ENCODE measurements at regions of chr19 and their contacts with region 1.

Region 1: DNA sequence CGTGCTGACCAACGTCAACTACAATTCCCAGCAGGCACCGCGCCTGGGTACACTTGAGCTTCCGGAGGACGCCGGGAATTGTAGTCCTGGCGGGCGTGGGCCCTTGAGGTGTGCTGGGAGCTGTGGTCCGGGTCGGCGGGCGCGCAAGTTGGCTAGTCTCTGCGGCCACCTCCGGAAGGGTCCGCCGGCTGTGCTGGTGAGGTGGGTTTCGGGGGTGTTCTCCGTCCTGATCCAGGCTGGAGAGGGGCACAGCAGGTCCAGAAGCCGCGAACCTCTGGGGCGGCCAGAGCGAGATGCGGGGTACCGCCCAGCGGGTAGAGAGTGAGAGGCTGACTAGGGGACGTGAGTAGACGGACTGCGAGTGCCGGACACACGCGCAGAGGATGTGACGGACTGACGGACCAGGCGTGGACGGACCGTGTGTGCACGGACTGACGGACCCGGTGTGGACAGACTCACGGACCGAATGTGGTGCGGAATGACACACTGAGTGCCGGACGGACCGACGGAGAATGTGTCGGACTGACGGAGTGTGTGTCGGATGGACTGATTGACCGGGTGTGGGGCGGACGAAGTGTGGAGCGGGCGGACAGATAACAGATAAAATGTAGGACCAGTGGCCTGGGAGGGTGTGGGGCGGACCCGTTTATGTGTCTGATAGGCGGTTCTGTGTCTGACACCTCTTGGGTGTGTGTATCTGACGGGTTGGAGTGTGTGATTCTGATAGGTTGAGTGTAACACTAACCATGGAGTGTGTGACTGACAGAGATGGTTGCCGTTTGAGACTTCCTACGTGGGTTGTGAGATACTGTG is at the start of gene ZSCAN22:
- DNase-seq: peak; percentile 90
- ATAC-seq: peak; percentile 92
- H3K4me3 ChIP-seq: peak within 1 kb of the TSS; percentile 72 to 98 (median 83)
- H3K4me3 Mint-ChIP-seq: no peak within 1 kb of the TSS
- H3K27ac ChIP-seq: peak within 1 kb of the TSS; percentile 71 to 82
- H3K27ac Mint-ChIP-seq: no peak within 1 kb of the TSS
- H3K4me1 ChIP-seq: peaks cover 11 to 23% of the 10 kb centered on the region in 2 donors
- H3K4me1 Mint-ChIP-seq: no peaks in the 10 kb centered on the region
- H3K27me3 ChIP-seq: no peaks in the 10 kb centered on the region
- H3K27me3 Mint-ChIP-seq: no peaks in the 10 kb centered on the region
- CTCF ChIP-seq: no peak
- total RNA-seq, gene ZSCAN22: 7.1 TPM in 2 replicates

Region 2: GRCh38 chr19:58261968-58262921 is 64.9 kb before region 1 on chr19:
- CTCF ChIA-PET with region 1: no interaction called
- POLR2A ChIA-PET with region 1: no interaction called
- intact Hi-C with region 1: no loop called
- DNase-seq: no peak
- ATAC-seq: no peak
- H3K4me3 ChIP-seq: peak overlapping the region in 1 of 5 experiments; percentile 7
- H3K4me3 Mint-ChIP-seq: no peak overlapping the region
- H3K27ac ChIP-seq: no peak overlapping the region
- H3K27ac Mint-ChIP-seq: no peak overlapping the region
- H3K4me1 ChIP-seq: no peaks in the 10 kb centered on the region
- H3K4me1 Mint-ChIP-seq: no peaks in the 10 kb centered on the region
- H3K27me3 ChIP-seq: no peaks in the 10 kb centered on the region
- H3K27me3 Mint-ChIP-seq: no peaks in the 10 kb centered on the region
- CTCF ChIP-seq: no peak

Region 3: DNA sequence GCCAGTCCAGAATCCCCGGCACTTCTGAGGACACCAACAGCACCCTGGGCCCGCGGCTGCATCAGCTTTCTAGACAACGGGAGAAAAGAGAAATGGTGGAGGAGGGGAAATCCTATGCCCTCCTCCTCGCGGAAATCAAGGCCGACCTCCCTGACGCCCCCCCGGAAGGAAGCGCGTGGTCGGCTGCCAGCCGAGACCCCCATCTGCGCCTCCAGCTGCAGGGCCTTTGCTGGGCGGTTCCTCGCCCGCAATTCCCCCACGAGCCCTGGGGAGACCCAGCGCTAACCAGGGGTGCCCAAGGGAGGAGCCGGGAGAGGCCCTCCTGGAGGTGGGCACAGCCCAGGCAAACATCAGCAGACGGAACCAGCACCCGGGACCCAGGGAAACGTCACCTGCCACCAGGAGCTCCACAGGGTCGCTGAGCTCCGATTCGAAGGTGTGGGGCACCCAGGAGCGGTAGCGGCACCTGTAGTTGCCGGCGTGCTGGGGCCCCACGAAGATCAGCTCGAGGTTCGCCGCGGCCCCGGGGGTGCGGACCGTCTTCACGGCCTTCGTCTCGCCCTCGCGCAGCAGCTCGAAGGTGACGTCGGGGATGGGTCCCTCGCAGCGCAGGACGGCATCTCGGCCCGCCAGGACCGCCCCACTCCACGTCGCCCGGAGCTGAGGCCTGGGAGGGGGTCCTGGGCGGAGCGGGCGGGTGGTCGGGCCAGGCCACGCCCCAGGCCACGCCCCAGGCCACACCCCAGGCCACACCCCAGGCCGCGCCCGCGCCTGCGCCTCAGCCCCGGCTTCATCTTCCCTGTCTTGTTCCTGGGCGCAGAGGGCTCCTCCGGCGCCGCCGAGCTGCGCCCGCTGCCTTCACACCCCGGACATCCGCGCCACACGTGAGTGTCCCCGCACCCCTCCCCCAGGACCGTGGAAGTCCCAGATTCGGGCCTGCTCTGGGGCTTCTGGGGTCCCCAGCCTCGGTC is 20.1 kb after region 1 on chr19:
- CTCF ChIA-PET with region 1: no interaction called
- POLR2A ChIA-PET with region 1: interaction called, 8 read pairs
- intact Hi-C with region 1: loop called (anchors 1 kb)
- DNase-seq: peak; percentile 91
- ATAC-seq: peak; percentile 96
- H3K4me3 ChIP-seq: peak overlapping the region; percentile 47 to 75 (median 62)
- H3K4me3 Mint-ChIP-seq: peak overlapping the region; percentile 96
- H3K27ac ChIP-seq: peak overlapping the region; percentile 59 to 77
- H3K27ac Mint-ChIP-seq: peak overlapping the region; percentile 89
- H3K4me1 ChIP-seq: peaks cover 16 to 28% of the 10 kb centered on the region in 2 donors
- H3K4me1 Mint-ChIP-seq: peaks cover 30% of the 10 kb centered on the region
- H3K27me3 ChIP-seq: no peaks in the 10 kb centered on the region
- H3K27me3 Mint-ChIP-seq: no peaks in the 10 kb centered on the region
- CTCF ChIP-seq: no peak

Region 4: DNA sequence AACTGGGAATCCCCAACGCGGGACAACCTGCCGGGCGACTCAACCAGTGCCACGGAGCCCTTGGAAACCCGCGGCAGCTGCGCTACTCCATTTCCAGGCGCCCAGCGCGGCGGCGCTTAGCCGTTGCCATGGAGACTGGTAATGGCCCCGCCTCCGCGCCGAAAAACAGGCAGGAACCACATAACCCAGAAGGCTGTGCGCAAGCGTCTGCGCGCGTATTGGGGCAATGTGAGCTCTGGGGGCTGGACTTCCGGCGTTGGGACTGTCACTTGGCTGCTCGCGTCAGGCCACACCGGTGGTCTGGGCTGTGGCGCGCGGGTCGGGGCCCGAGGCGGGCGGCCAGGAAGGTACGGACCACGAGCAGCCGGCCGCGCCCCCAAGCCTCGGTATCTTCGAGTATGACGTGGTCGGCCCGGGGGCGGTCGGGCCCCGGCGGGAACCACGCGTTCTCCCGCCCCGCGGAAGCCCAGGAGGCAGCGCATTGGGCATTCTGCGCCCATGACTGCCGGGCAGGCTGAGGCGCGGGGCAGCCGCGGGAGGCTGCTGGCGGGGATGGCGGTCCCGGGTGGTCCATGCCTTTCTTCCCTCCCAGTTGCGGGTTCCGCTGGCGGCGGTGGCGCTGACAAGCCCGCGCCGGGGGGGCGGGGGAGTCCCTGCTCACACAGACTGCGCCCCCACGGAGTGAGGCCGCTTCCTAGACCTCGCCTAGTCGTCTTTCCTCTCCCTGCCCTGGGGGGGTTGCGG is 124.4 kb after region 1 on chr19 and contains the start of gene ZNF324B:
- CTCF ChIA-PET with region 1: no interaction called
- POLR2A ChIA-PET with region 1: interaction called, 3 read pairs
- intact Hi-C with region 1: loop called (anchors 5 kb)
- DNase-seq: peak; percentile 97
- ATAC-seq: peak; percentile 97
- H3K4me3 ChIP-seq: peak within 1 kb of the TSS; percentile 55 to 81 (median 73)
- H3K4me3 Mint-ChIP-seq: peak within 1 kb of the TSS; percentile 93
- H3K27ac ChIP-seq: peak within 1 kb of the TSS in 1 of 2 donors; percentile 66
- H3K27ac Mint-ChIP-seq: peak within 1 kb of the TSS; percentile 85
- H3K4me1 ChIP-seq: peaks cover 5 to 12% of the 10 kb centered on the region in 2 donors
- H3K4me1 Mint-ChIP-seq: peaks cover 20% of the 10 kb centered on the region
- H3K27me3 ChIP-seq: peaks cover 0 to 24% (median 2%) of the 10 kb centered on the region in 4 experiments
- H3K27me3 Mint-ChIP-seq: peaks cover 13% of the 10 kb centered on the region
- CTCF ChIP-seq: no peak
- total RNA-seq, gene ZNF324B: 15.0 and 17.4 TPM in 2 replicates

Measured in B cell (primary cell).